A673 (cell line): ENCODE measurements at regions of chr11 and their contacts with region 1.

Region 1: DNA sequence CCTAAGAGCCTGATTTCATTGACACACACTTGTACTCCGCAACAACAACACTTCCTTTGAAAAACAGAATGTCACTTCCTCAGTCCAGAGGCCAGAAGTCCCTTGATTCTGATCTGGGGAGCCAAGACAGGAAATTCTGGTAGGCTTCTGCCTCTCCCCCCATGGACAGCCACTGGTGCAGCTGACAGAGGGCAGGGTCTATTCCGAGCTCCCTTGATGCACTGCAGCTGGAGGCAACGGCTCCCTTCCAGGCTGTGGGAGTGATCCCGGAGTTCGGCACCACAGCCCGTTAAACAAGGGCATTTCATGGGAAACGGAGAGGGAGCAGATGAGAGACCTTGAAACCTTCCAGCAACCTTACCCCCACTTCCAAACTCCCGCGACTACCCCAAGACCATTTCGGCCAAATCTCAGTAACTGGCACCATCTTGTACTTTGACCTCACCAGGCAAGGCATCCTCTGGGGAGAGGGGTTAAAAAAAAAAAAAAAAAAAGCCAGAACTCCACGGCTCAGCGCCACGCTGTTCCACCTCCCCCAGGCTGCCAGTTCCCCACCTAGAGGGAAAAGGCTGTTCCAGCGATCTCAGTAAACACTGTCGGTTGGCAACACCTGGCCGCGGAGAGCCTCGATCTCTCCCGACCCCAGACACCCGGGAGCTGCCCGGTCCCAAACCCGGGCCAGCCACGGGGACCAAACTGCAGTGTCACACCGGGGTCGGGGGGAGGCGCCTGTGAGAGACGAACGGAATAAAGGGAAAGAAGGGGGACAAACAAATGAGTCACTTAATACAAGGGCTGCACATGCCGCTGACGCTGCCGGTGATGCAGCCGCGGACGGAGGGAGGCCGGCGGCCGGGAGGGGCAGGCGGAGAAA is 1.1 kb downstream of the GAB2 start:
- DNase-seq: peak; percentile 96
- H3K4me3 ChIP-seq: peak overlapping the region; percentile 75
- H3K27ac ChIP-seq: peak overlapping the region; percentile 54
- H3K4me1 ChIP-seq: peaks cover 50% of the 10 kb centered on the region
- H3K27me3 ChIP-seq: no peaks in the 10 kb centered on the region
- CTCF ChIP-seq: peak; percentile 80

Region 2: GRCh38 chr11:78139422-78140391 is 276.8 kb before region 1 on chr11 and contains the start of gene ALG8:
- CTCF ChIA-PET with region 1: no interaction called
- POLR2A ChIA-PET with region 1: no interaction called
- intact Hi-C with region 1: loop called (anchors 5 kb)
- DNase-seq: peak; percentile 99
- H3K4me3 ChIP-seq: peak within 1 kb of the TSS; percentile 64
- H3K27ac ChIP-seq: peak within 1 kb of the TSS; percentile 77
- H3K4me1 ChIP-seq: no peaks in the 10 kb centered on the region
- H3K27me3 ChIP-seq: no peaks in the 10 kb centered on the region
- CTCF ChIP-seq: no peak
- total RNA-seq, gene ALG8: 112 and 131 TPM in 2 replicates

Region 3: GRCh38 chr11:78228467-78228866 is 188.1 kb before region 1 on chr11:
- CTCF ChIA-PET with region 1: interaction called, 7 read pairs
- POLR2A ChIA-PET with region 1: no interaction called
- intact Hi-C with region 1: loop called (anchors 2 kb)
- DNase-seq: peak; percentile 74
- H3K4me3 ChIP-seq: no peak overlapping the region
- H3K27ac ChIP-seq: no peak overlapping the region
- H3K4me1 ChIP-seq: peaks cover 6% of the 10 kb centered on the region
- H3K27me3 ChIP-seq: no peaks in the 10 kb centered on the region
- CTCF ChIP-seq: peak; percentile 77

Region 4: GRCh38 chr11:78350646-78351165 is 65.8 kb before region 1 on chr11:
- CTCF ChIA-PET with region 1: no interaction called
- POLR2A ChIA-PET with region 1: interaction called, 3 read pairs
- intact Hi-C with region 1: loop called (anchors 10 kb)
- DNase-seq: peak; percentile 79
- H3K4me3 ChIP-seq: peak overlapping the region; percentile 20
- H3K27ac ChIP-seq: peak overlapping the region; percentile 87
- H3K4me1 ChIP-seq: peaks cover 70% of the 10 kb centered on the region
- H3K27me3 ChIP-seq: no peaks in the 10 kb centered on the region
- CTCF ChIP-seq: no peak